ENCODE measurements at regions of chr10 and their contacts with region 1.

Region 1: DNA sequence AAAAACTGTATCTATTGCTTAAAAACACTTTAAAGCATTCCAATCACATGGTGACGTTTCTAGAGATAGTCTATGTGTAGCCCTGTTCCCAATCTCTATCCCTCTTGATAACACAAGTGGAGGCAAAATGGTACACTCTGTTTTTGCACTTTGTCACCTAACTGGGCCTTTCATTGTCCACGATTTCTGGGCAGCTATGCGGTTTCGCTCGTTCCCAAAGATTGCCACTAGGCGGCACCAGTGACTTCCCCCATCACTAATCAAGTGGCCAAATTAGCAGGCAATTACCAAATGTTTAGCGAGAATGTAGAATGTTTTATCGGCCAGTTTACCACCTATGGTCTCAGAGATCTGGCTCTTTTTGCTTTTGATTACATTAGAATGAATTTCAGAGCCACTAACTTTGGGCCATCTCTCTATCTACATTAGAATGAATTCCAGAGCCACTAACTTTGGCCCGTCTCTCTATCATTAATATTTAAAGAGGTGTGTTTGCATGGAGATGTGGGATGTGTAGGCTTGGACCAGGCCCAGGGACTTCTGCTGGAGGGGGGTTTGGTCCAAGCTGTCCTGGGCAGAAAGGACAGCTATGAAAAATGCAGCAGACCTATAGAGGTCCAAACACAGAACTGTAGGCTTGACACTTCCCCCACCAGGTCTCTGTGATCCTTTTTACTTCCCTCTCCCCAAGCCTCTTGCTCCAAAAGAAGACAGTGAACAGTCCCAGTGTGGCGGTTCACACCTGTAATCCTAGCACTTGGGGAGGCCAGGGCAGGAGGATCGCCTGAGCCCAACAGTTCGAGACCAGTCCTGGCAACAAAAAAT is 90.1 kb downstream of the EPC1 start:
- DNase-seq: peak; percentile 78
- ATAC-seq: peak; percentile 76
- H3K4me3 Mint-ChIP-seq: no peak overlapping the region
- H3K27ac Mint-ChIP-seq: no peak overlapping the region
- H3K4me1 Mint-ChIP-seq: peaks cover 7% of the 10 kb centered on the region
- H3K27me3 Mint-ChIP-seq: no peaks in the 10 kb centered on the region

Region 2: DNA sequence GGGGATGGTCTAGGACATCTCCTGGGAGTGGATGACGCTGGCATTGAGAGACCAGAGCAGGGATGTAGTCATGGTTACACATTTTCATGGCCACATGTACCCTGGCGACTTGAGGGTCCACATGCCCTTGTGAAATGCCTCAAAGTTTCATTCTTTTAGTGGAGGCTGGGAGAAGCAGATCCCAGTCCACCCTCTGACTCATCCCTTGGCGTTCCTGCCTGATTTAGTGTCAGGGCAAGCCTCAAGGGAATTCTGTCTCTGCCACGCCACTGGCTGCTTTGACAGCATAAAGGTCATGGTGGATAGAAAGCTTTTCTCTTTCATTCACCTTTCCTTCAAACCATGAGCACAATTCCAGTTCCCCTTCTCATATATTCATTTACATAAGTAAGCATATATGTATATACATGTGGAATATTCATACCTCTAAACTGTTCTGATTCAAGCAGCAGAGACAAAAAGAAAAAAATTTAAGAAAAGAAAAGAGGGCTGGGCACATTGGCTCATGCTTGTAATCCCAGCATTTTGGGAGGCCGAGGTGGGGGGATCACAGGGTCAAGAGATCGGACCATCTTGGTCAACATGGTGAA is 178.8 kb before region 1 on chr10:
- CTCF ChIA-PET with region 1: no interaction called
- POLR2A ChIA-PET with region 1: no interaction called
- DNase-seq: no peak
- ATAC-seq: no peak
- H3K4me3 Mint-ChIP-seq: no peak overlapping the region
- H3K27ac Mint-ChIP-seq: no peak overlapping the region
- H3K4me1 Mint-ChIP-seq: no peaks in the 10 kb centered on the region
- H3K27me3 Mint-ChIP-seq: peaks cover 12% of the 10 kb centered on the region

Region 3: GRCh38 chr10:32244421-32245207 is 12.2 kb before region 1 on chr10:
- CTCF ChIA-PET with region 1: interaction called, 22 read pairs
- POLR2A ChIA-PET with region 1: interaction called, 3 read pairs
- DNase-seq: no peak
- ATAC-seq: no peak
- H3K4me3 Mint-ChIP-seq: no peak overlapping the region
- H3K27ac Mint-ChIP-seq: no peak overlapping the region
- H3K4me1 Mint-ChIP-seq: peaks cover 11% of the 10 kb centered on the region
- H3K27me3 Mint-ChIP-seq: peaks cover 5% of the 10 kb centered on the region

Region 4: GRCh38 chr10:32266979-32267378 is 10.2 kb after region 1 on chr10:
- CTCF ChIA-PET with region 1: interaction called, 16 read pairs
- POLR2A ChIA-PET with region 1: no interaction called
- DNase-seq: no peak
- ATAC-seq: no peak
- H3K4me3 Mint-ChIP-seq: no peak overlapping the region
- H3K27ac Mint-ChIP-seq: no peak overlapping the region
- H3K4me1 Mint-ChIP-seq: no peaks in the 10 kb centered on the region
- H3K27me3 Mint-ChIP-seq: no peaks in the 10 kb centered on the region

Region 5: DNA sequence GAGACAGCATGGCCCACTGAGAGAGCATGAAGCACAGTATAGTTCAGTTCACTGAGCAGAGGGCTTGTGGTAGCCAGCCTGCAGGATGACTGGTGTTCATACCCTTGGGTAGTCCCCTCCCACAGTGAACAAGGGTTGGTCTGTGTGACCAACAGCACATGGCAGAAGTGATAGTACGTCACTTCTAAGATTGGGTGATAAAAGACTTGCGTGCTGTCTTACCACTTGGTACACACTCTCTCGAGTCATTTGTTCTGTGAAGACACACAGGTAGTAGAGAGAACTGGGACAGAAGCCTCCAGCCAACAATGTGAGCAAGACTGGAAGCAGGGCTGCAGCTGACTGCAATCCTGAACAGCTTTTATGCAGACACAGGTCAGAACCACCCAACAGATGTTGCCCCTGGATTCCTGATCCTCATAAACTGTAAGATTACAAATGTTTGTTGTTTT is 75.5 kb after region 1 on chr10:
- CTCF ChIA-PET with region 1: interaction called, 13 read pairs
- POLR2A ChIA-PET with region 1: no interaction called
- DNase-seq: peak; percentile 82
- ATAC-seq: peak; percentile 99
- H3K4me3 Mint-ChIP-seq: peak overlapping the region; percentile 35
- H3K27ac Mint-ChIP-seq: peak overlapping the region; percentile 83
- H3K4me1 Mint-ChIP-seq: peaks cover 75% of the 10 kb centered on the region
- H3K27me3 Mint-ChIP-seq: no peaks in the 10 kb centered on the region

Region 6: GRCh38 chr10:32367793-32368453 is 111.1 kb after region 1 on chr10:
- CTCF ChIA-PET with region 1: interaction called, 47 read pairs
- POLR2A ChIA-PET with region 1: no interaction called
- DNase-seq: peak; percentile 81
- ATAC-seq: peak; percentile 50
- H3K4me3 Mint-ChIP-seq: peak overlapping the region; percentile 31
- H3K27ac Mint-ChIP-seq: peak overlapping the region; percentile 39
- H3K4me1 Mint-ChIP-seq: peaks cover 39% of the 10 kb centered on the region
- H3K27me3 Mint-ChIP-seq: no peaks in the 10 kb centered on the region

Region 7: DNA sequence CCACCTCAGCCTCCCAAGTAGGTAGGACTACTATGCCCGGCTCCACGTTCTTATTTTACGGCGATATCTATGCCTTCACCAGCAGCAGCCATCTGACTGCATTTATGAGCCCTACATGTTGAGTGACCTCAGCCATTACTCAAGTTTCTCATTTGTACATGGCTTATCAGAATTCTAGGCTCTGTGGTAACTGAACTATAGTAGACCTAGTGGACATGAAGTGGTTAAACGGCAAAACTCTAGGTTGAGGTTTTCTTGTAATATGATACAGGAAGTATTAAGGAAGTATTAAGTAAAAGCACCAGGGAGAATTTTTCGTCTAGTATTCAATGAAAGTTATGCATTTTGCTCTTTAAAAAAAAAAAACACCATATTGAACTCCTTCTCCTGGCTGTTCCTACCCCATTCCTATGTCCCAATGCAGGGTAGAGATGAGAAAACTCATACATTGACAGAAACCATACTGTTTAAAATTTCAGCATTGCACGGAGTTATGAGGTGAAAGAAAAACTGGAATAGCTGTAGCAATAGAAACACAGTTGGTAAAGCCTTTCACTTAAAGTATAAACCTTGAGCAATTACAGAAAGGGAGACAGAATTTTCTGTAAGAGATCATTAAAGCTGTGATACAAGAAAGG is 129.9 kb after region 1 on chr10:
- CTCF ChIA-PET with region 1: no interaction called
- POLR2A ChIA-PET with region 1: no interaction called
- DNase-seq: no peak
- ATAC-seq: no peak
- H3K4me3 Mint-ChIP-seq: no peak overlapping the region
- H3K27ac Mint-ChIP-seq: no peak overlapping the region
- H3K4me1 Mint-ChIP-seq: peaks cover 11% of the 10 kb centered on the region
- H3K27me3 Mint-ChIP-seq: no peaks in the 10 kb centered on the region

Region 8: DNA sequence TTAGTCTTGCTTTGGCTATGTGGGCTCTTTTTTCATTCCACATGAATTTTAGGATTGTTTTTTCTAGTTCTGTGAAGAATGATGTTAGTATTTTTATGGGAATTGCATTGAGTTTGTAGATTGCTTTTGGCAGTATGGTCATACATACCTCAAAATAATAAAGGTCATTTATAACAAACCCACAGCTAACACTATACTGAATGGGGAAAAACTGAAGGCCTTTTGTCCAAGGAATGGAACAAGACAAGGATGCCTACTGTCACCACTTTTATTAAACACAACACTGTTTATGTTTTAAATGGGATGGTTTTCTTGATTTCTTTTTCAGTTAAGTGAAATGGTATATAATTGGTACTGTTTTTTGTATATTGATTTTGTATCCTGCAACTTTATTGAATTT is 273.4 kb after region 1 on chr10:
- CTCF ChIA-PET with region 1: no interaction called
- POLR2A ChIA-PET with region 1: no interaction called
- DNase-seq: no peak
- ATAC-seq: no peak
- H3K4me3 Mint-ChIP-seq: no peak overlapping the region
- H3K27ac Mint-ChIP-seq: no peak overlapping the region
- H3K4me1 Mint-ChIP-seq: no peaks in the 10 kb centered on the region
- H3K27me3 Mint-ChIP-seq: no peaks in the 10 kb centered on the region